GM12878 (cell line): ENCODE measurements at regions of chr4 and their contacts with region 1.

Region 1: GRCh38 chr4:69057620-69058409 is 38.5 kb upstream of the UGT2B7 start:
- DNase-seq: no peak
- ATAC-seq: peak; percentile 79
- H3K4me3 ChIP-seq: peak overlapping the region; percentile 24; the same call in 1 of the 2 replicates
- H3K27ac ChIP-seq: peak overlapping the region; percentile 61
- H3K4me1 ChIP-seq: peaks cover 4% of the 10 kb centered on the region; the same call in 1 of the 2 replicates
- H3K27me3 ChIP-seq: no peaks in the 10 kb centered on the region
- CTCF ChIP-seq: no peak
- EP300 ChIP-seq: no peak
- POLR2A ChIP-seq: no peak
- RAD21 ChIP-seq: no peak

Region 2: GRCh38 chr4:68498413-68499007 is 559.3 kb before region 1 on chr4:
- CTCF ChIA-PET with region 1: interaction called, 8 read pairs
- POLR2A ChIA-PET with region 1: no interaction called
- RAD21 ChIA-PET with region 1: interaction called, 7 read pairs
- SMC1A ChIA-PET with region 1: interaction called, 10 read pairs
- in situ Hi-C with region 1: no loop called
- intact Hi-C with region 1: loop called (anchors 10 kb)
- DNase-seq: peak; percentile 30
- ATAC-seq: peak; percentile 97
- H3K4me3 ChIP-seq: no peak overlapping the region
- H3K27ac ChIP-seq: no peak overlapping the region
- H3K4me1 ChIP-seq: 0 out of 2 replicates have a peak, but pooled peaks cover 3% of the 10 kb centered on the region
- H3K27me3 ChIP-seq: no peaks in the 10 kb centered on the region
- CTCF ChIP-seq: peak; percentile 74 to 93 (median 86)
- EP300 ChIP-seq: no peak
- POLR2A ChIP-seq: no peak
- RAD21 ChIP-seq: peak; percentile 100

Region 3: DNA sequence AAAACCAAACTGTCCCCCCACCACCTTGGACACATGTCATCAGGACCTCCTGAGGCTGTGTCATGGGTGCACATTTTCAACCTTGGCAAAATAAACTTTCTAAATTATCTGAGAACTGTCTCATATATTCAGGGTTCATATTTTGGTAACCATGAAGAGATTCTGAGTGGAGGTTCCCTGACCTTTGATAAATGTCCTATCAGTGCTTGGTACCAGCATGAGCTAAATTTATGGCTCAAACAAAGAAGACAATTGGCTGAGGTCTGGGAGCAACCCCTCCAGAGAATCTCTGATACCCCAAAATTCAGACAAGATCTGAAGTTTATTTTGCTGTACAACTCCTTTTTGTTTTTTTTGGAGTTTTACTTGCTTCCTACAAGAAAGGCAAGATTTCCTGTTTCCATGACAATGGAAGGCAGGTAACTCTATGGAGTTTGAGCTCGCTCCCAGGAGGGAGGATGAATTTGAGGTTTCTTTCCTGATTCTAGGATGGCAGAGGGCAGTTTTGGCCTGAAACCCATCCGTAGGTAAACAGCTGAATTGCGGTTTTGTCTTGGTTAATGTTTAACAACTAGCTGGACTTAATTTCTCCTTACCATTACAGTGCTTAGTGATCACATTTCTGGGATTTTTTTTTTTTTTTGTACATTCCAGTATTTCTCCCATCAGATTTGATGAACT is 401.9 kb before region 1 on chr4:
- CTCF ChIA-PET with region 1: no interaction called
- POLR2A ChIA-PET with region 1: no interaction called
- RAD21 ChIA-PET with region 1: no interaction called
- SMC1A ChIA-PET with region 1: interaction called, 3 read pairs
- in situ Hi-C with region 1: no loop called
- intact Hi-C with region 1: loop called (anchors 5 kb)
- DNase-seq: no peak
- ATAC-seq: peak; percentile 21
- H3K4me3 ChIP-seq: no peak overlapping the region
- H3K27ac ChIP-seq: no peak overlapping the region
- H3K4me1 ChIP-seq: no peaks in the 10 kb centered on the region
- H3K27me3 ChIP-seq: no peaks in the 10 kb centered on the region
- CTCF ChIP-seq: no peak
- EP300 ChIP-seq: no peak
- POLR2A ChIP-seq: no peak
- RAD21 ChIP-seq: no peak

Region 4: GRCh38 chr4:69025191-69025998 is 32.4 kb before region 1 on chr4:
- CTCF ChIA-PET with region 1: interaction called, 6 read pairs
- POLR2A ChIA-PET with region 1: interaction called, 8 read pairs
- RAD21 ChIA-PET with region 1: interaction called, 13 read pairs
- SMC1A ChIA-PET with region 1: interaction called, 26 read pairs
- in situ Hi-C with region 1: no loop called
- intact Hi-C with region 1: no loop called
- DNase-seq: no peak
- ATAC-seq: peak; percentile 92
- H3K4me3 ChIP-seq: no peak overlapping the region
- H3K27ac ChIP-seq: no peak overlapping the region
- H3K4me1 ChIP-seq: no peaks in the 10 kb centered on the region
- H3K27me3 ChIP-seq: no peaks in the 10 kb centered on the region
- CTCF ChIP-seq: peak; percentile 19 to 54 (median 30); a peak in 4 of 6 replicates
- EP300 ChIP-seq: no peak
- POLR2A ChIP-seq: no peak
- RAD21 ChIP-seq: peak; percentile 57

Region 5: DNA sequence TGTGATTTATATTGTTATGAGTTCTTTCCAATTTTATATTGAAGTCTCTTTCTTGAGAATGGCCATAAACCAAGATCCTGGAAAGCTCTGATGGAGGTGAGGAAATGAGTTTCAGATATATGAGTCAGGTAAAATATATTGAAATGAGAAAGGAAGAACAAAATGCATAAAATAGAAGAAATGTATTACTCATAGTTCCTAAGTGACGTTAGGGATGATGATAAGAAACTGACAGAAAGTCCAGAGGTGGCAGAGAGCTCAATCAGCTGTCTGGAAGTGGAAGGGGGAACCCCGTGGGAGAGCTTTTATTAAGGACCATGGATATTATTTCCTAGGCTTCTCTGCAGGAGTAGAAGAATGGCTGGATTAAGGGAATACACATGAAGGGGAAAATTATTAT is 63.1 kb after region 1 on chr4:
- CTCF ChIA-PET with region 1: interaction called, 11 read pairs
- POLR2A ChIA-PET with region 1: no interaction called
- RAD21 ChIA-PET with region 1: interaction called, 5 read pairs
- SMC1A ChIA-PET with region 1: interaction called, 5 read pairs
- in situ Hi-C with region 1: no loop called
- intact Hi-C with region 1: loop called (anchors 5 kb)
- DNase-seq: no peak
- ATAC-seq: no peak
- H3K4me3 ChIP-seq: no peak overlapping the region
- H3K27ac ChIP-seq: no peak overlapping the region
- H3K4me1 ChIP-seq: no peaks in the 10 kb centered on the region
- H3K27me3 ChIP-seq: no peaks in the 10 kb centered on the region
- CTCF ChIP-seq: no peak
- EP300 ChIP-seq: no peak
- POLR2A ChIP-seq: no peak
- RAD21 ChIP-seq: no peak

Region 6: DNA sequence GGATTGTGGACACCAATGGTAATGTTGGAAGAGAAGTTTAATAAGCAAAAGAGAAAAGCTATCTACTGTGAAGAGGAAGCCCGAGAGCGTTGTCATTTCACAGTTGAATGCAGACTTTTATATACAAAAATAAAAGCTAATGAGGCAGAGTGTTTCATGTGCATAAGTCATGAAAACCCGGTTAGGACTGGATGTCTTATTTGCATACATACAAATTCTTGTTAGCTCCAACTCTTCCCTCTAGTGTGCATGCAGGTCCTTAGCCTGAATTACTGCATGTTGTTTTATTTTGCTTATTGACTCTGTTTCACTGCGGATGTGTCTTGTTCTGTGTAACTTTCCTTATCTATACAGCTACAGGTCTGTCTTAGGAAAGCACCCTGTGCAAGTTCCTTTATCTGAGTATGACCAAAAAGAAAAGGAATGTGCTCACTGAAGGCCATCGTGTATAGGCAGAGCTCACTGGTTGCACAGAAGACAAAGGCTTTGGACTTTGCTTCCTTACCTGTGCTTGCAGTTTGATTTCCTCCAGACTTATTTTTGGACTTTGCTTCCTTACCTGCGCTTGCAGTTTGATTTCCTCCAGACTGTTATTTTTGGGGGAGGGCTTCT is 181.8 kb after region 1 on chr4:
- CTCF ChIA-PET with region 1: no interaction called
- POLR2A ChIA-PET with region 1: no interaction called
- RAD21 ChIA-PET with region 1: no interaction called
- SMC1A ChIA-PET with region 1: no interaction called
- in situ Hi-C with region 1: no loop called
- intact Hi-C with region 1: no loop called
- DNase-seq: no peak
- ATAC-seq: no peak
- H3K4me3 ChIP-seq: no peak overlapping the region
- H3K27ac ChIP-seq: no peak overlapping the region
- H3K4me1 ChIP-seq: no peaks in the 10 kb centered on the region
- H3K27me3 ChIP-seq: no peaks in the 10 kb centered on the region
- CTCF ChIP-seq: no peak
- EP300 ChIP-seq: no peak
- POLR2A ChIP-seq: no peak
- RAD21 ChIP-seq: no peak

Region 7: DNA sequence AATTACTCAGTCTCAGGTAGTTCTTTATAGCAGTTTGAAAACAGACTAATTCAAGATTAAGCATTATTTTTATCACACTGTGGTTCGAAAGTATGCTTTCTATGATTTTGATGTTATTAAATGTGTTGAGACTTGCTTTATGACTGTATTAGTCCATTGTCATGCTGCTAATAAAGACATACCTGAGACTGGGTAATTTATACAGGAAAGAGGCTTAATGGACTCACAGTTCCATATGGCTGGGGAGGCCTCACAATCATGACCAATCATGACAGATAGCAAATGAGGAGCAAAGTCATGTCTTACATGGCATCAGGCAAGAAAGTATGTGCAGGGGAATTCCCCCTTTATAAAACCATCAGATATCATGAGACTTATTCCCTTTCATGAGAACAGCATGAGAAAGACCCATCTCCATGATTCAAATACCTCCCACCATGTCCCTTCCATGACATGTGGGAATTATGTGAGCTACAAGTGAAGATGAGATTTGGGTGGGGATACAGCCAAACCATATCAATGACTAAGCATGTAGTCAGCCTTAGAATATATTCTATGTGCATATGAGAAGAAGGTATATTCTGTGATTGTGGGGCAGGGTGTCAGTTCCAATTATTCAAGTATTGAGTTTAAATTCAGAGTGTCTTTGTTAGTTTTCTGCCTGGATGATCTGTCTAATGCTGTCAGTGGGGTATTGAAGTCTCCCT is 639.9 kb after region 1 on chr4:
- CTCF ChIA-PET with region 1: no interaction called
- POLR2A ChIA-PET with region 1: no interaction called
- RAD21 ChIA-PET with region 1: no interaction called
- SMC1A ChIA-PET with region 1: no interaction called
- in situ Hi-C with region 1: no loop called
- intact Hi-C with region 1: no loop called
- DNase-seq: no peak
- ATAC-seq: no peak
- H3K4me3 ChIP-seq: no peak overlapping the region
- H3K27ac ChIP-seq: no peak overlapping the region
- H3K4me1 ChIP-seq: no peaks in the 10 kb centered on the region
- H3K27me3 ChIP-seq: no peaks in the 10 kb centered on the region
- CTCF ChIP-seq: no peak
- EP300 ChIP-seq: no peak
- POLR2A ChIP-seq: no peak
- RAD21 ChIP-seq: no peak

Region 8: DNA sequence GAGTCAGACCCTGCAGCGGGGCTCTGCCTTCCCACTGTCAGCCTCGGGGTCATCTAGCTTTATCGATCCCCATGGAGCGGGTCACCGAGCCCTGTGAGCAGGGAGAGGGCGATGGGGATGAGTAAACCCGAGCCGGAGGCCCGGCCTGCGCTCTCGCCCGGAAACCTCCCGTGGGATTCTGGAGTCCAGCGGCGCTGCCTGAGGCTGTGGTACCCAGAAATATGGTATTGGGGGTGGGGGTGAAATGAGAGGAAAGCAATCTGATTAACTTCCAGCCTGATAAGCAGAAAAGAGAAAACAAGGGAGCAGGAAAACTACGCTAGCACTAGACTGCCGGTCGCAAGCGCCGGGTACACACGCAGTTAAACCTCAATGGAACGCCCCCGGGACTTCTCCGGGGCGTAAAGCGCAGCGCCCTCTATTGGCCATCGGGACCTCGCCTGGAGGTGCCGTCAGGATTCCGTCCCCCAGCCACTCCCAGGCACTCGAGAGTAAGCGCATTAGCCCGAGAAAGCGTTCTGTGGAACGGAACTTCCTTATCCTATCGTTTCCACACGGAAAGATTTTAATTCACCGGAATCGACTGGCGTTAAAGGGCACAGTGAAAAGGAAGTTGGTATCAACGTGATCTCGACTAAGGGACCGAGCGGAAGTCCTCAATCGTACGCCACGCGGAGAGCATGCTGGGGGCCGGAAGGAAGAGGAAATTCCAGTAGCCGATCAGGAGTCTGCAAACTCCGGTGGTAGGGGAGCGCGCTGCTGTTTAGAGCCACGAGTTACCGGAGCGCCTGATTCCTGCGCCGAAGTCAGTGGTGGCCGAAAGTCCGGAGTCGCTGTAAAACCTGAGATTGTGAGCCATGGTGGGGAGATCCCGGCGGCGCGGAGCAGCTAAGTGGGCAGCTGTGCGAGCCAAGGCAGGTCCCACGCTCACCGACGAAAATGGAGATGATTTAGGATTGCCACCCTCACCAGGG is 1630.3 kb after region 1 on chr4 and contains the start of gene UTP3:
- CTCF ChIA-PET with region 1: no interaction called
- POLR2A ChIA-PET with region 1: no interaction called
- RAD21 ChIA-PET with region 1: no interaction called
- SMC1A ChIA-PET with region 1: no interaction called
- in situ Hi-C with region 1: loop called (anchors 25 kb)
- intact Hi-C with region 1: no loop called
- DNase-seq: peak; percentile 95
- ATAC-seq: peak; percentile 93
- H3K4me3 ChIP-seq: peak within 1 kb of the TSS; percentile 90
- H3K27ac ChIP-seq: peak within 1 kb of the TSS; percentile 94
- H3K4me1 ChIP-seq: peaks cover 3% of the 10 kb centered on the region; the same call in 1 of the 2 replicates
- H3K27me3 ChIP-seq: no peaks in the 10 kb centered on the region
- CTCF ChIP-seq: peak; percentile 94 to 100 (median 97)
- EP300 ChIP-seq: no peak; a peak in 1 of 4 replicates
- POLR2A ChIP-seq: peak; percentile 89
- RAD21 ChIP-seq: peak; percentile 75
- polyA plus RNA-seq, gene UTP3: 15.8 to 21.1 TPM